GM10248 (cell line): ENCODE measurements at regions of chr6 and their contacts with region 1.

Region 1: DNA sequence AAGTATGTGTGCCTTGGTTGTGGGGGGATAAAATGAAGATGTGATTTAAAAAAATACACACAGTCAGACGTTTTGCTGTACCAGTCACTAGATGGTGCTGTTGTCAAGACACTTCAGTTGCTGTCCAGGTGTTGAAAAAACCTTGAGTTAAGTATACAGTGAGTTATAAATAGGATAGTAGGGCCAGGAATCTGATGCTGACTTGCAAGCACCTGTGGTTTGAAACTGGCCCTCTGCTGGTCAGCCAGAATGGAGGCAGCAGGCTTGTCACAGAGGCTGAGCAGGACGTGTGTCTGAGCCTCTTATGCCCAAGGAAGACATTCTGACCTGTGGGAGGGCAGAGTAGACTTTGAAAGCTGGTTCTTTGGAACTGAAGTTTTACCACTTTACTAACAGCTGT is 27.8 kb downstream of the RNF8 start:
- DNase-seq: peak; percentile 71
- CTCF ChIP-seq: peak; percentile 51

Region 2: DNA sequence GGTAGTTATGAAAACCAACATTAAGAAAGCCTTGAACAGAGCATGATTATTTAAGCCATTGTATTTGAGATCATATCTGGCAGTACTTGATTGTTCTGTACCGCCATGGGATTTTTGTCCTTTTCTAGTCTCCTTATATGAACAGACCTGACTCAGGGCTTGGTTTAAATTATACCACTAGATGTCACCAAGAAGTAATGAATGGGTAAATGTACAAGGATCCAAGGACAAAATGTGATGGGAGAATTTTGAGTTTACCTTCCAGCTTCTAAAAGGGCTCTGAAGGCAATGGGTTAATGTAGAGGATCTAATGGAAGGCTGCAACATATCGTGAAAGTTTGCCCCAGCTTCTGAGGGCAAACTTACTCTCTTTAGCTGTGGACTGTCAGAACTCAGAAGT is 15.8 kb before region 1 on chr6:
- CTCF ChIA-PET with region 1: interaction called, 33 read pairs
- POLR2A ChIA-PET with region 1: no interaction called
- DNase-seq: no peak
- CTCF ChIP-seq: peak; percentile 16

Region 3: DNA sequence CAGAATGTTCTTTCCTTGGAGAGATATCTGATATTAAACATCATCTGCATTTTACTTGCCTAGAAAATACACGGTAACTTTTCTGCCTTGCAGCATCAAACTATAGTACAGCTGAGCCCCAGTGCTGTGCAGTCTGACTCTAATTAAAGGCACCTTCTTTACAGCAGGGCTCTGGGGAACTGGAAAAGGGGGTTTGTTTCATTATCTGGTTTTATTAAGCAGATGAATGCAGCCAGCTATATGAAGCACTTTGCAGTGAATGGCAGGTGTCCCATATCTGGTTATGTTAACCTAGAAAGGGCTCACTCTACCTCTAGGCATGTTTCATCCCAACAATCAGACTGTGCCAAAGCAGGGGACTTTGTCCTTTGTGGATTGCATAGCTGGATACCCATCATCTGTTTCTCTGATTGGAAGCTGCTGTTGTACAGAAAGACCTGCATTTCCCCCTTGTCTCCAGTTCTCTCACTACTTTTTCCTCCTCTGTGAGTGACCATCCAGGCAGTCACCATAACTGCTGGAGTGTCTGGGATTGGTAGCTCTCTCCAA is 11.9 kb after region 1 on chr6:
- CTCF ChIA-PET with region 1: interaction called, 16 read pairs
- POLR2A ChIA-PET with region 1: no interaction called
- DNase-seq: no peak
- CTCF ChIP-seq: no peak